A673 (cell line): ENCODE measurements at regions of chr6 and their contacts with region 1.

Region 1: DNA sequence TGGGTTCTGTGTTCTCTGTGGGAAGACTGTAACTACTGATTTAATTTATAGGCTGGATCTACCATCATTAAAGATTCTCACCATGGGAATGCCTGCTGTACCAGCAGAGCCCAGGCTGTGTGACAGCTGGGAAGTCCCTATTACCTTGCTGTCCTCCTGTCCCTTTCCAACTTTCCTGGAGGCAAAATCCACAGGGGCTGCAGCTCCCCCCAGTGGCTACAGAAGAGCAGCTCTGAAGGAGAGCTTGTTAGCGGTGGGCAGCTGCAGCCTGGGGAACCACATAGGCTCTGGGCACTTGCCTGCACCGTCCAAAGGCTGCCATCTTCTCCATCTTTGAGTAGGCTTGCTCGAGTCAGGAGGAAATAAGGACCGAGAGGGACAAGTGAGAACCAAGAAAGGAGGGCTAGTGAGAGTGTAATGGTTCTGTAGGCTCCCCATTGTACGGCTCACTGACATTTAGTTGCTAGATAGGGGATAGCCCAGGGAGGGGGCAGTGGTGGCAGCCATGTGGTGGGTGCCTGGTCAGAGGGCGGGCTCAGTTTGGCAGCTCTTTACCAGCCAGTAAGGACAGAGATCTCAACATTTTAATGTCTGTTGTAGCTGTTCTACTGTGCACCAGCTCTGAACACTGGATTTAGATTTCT is 155.1 kb upstream of the MLIP start:
- DNase-seq: peak; percentile 83
- H3K4me3 ChIP-seq: no peak overlapping the region
- H3K27ac ChIP-seq: no peak overlapping the region
- H3K4me1 ChIP-seq: no peaks in the 10 kb centered on the region
- H3K27me3 ChIP-seq: peaks cover 5% of the 10 kb centered on the region
- CTCF ChIP-seq: peak; percentile 86

Region 2: DNA sequence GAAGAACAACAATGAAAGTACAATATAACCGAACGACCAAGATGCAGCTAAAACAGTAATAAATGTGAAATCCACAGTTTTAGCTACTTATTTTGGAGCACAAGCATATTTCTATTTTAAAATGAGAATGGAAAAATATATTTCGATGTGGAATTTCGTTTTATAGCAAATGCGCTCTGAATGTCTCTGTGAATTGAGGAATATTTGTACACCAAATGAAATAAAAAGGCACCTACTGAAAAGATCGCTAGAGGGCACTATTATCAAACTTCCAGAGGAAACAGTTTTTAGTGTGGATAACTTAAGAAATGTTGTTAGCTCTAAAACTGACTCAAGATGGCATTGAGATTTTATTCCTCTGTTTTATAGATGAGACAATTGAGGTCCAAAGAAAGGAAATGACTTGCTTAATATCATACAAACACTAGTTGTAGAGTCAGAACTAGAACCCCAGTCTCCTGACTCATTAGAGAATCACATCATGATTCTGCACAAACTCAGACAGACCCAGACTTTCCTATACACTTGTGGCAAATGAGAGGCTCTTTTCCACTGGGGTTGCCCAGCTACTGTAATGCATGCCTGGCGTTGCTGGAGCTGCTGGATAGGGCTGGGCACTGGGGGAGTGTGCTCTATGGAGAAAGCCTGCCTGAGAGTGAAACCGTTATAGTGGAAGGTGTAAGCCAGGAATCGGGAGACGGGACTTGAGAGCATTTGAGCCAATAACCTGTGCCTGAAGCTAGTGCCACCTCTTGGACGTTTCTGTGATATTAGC is 463.1 kb before region 1 on chr6:
- CTCF ChIA-PET with region 1: no interaction called
- POLR2A ChIA-PET with region 1: no interaction called
- intact Hi-C with region 1: loop called (anchors 5 kb)
- DNase-seq: peak; percentile 73
- H3K4me3 ChIP-seq: no peak overlapping the region
- H3K27ac ChIP-seq: no peak overlapping the region
- H3K4me1 ChIP-seq: no peaks in the 10 kb centered on the region
- H3K27me3 ChIP-seq: no peaks in the 10 kb centered on the region
- CTCF ChIP-seq: peak; percentile 74

Region 3: DNA sequence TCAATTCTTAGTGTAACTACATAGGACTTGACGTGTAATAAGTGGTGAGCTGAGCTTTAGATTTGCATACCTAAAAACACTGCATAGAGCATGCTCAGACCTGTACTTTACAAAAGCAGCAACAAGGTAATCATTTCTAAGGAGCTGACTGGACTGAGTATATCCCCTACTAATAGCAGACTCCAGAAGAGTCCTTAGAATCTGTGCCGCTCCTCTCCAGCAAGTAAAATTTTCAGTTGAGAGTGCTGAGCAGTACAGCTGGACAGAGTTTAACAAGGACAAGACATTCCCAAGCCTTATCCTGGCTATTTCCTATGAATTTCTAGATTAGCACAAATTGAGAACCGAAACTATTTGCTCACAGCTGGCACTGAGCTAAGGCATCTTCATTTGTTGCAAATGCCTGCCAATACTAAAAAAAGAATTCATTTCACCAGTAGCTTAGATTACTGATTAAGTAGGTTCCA is 264.5 kb before region 1 on chr6:
- CTCF ChIA-PET with region 1: no interaction called
- POLR2A ChIA-PET with region 1: no interaction called
- intact Hi-C with region 1: no loop called
- DNase-seq: no peak
- H3K4me3 ChIP-seq: no peak overlapping the region
- H3K27ac ChIP-seq: no peak overlapping the region
- H3K4me1 ChIP-seq: no peaks in the 10 kb centered on the region
- H3K27me3 ChIP-seq: no peaks in the 10 kb centered on the region
- CTCF ChIP-seq: no peak

Region 4: GRCh38 chr6:53718597-53719460 is 237.4 kb before region 1 on chr6:
- CTCF ChIA-PET with region 1: interaction called, 13 read pairs
- POLR2A ChIA-PET with region 1: no interaction called
- intact Hi-C with region 1: no loop called
- DNase-seq: peak; percentile 73
- H3K4me3 ChIP-seq: no peak overlapping the region
- H3K27ac ChIP-seq: no peak overlapping the region
- H3K4me1 ChIP-seq: no peaks in the 10 kb centered on the region
- H3K27me3 ChIP-seq: peaks cover 24% of the 10 kb centered on the region
- CTCF ChIP-seq: peak; percentile 83

Region 5: GRCh38 chr6:53794720-53795253 is 161.4 kb before region 1 on chr6 and contains the start of gene LRRC1:
- CTCF ChIA-PET with region 1: interaction called, 12 read pairs
- POLR2A ChIA-PET with region 1: no interaction called
- intact Hi-C with region 1: loop called (anchors 5 kb)
- DNase-seq: peak; percentile 92
- H3K4me3 ChIP-seq: peak within 1 kb of the TSS; percentile 74
- H3K27ac ChIP-seq: peak within 1 kb of the TSS; percentile 20
- H3K4me1 ChIP-seq: peaks cover 11% of the 10 kb centered on the region
- H3K27me3 ChIP-seq: peaks cover 35% of the 10 kb centered on the region
- CTCF ChIP-seq: no peak
- total RNA-seq, gene LRRC1: 3.9 and 4.4 TPM in 2 replicates

Region 6: GRCh38 chr6:53869952-53870351 is 86.2 kb before region 1 on chr6:
- CTCF ChIA-PET with region 1: no interaction called
- POLR2A ChIA-PET with region 1: no interaction called
- intact Hi-C with region 1: no loop called
- DNase-seq: no peak
- H3K4me3 ChIP-seq: no peak overlapping the region
- H3K27ac ChIP-seq: no peak overlapping the region
- H3K4me1 ChIP-seq: no peaks in the 10 kb centered on the region
- H3K27me3 ChIP-seq: no peaks in the 10 kb centered on the region
- CTCF ChIP-seq: no peak

Region 7: DNA sequence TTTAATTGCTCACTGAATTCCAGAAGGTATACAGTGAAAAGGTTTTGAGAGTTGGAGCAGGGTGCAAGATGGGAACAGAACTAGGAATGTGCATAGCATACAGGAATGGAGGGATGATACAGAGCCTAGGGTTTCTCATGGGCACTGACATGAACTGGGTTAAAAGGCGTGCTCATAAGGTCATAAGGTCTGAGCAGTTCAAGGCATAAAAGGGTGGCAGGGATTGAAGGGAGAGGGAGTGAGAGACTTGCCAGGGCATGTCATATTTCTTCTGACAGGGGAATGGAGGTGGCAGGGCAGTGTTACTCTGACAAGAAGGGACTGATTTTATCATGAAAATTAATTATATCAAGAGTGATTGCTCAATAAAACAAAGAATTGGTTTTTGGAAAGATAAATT is 159.8 kb after region 1 on chr6:
- CTCF ChIA-PET with region 1: no interaction called
- POLR2A ChIA-PET with region 1: no interaction called
- intact Hi-C with region 1: no loop called
- DNase-seq: no peak
- H3K4me3 ChIP-seq: no peak overlapping the region
- H3K27ac ChIP-seq: no peak overlapping the region
- H3K4me1 ChIP-seq: peaks cover 28% of the 10 kb centered on the region
- H3K27me3 ChIP-seq: no peaks in the 10 kb centered on the region
- CTCF ChIP-seq: no peak